Activated CD4-positive, alpha-beta memory T cell treated with anti-CD3 and anti-CD28 coated beads for 36 hours (primary cell): ENCODE measurements at regions of chr1 and their contacts with region 1.

Region 1: DNA sequence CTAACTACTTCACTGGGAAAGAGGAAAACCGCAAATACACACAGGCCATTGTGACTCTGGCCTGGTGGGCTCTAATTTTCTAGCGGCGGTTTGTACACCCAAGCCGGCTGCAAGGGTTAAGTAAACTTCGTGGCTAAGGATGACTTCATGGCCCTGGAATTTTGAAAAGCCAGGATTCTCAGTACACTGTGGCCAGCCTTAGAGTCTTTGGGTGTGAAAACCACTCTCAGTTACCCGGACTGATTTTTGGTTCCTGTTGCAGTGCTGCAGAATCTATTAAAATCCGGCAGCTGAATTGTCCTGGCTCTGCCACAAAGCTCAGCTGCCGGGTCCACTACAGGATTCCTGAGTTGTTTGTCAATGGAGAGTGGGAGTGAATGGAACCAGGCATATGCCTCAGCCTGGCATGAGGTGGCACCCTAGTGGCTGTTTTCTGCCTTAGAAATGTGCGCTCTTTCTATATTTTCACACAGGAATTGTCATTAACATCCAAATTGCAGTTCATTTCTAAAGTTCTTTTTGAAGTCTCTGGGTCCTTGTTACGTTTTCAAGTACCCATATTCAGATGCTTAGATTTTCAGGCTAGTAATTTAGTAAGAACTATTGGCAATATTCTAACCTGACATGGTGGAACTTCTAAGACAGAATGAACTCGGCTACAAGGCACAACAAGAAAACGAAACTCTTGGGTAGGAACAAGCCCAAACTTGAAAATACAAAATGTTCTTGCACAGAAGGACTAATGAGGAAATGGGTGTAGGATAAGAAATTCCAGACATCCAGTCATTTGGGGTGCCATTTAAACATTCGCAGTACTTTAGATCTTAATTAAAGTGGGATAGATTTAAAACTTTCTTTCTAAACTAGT is 255.9 kb downstream of the NFIA start:
- DNase-seq: no peak
- H3K4me3 Mint-ChIP-seq: no peak overlapping the region
- H3K27ac Mint-ChIP-seq: no peak overlapping the region
- H3K4me1 Mint-ChIP-seq: peaks cover 2% of the 10 kb centered on the region
- H3K27me3 Mint-ChIP-seq: peaks cover 2% of the 10 kb centered on the region

Region 2: GRCh38 chr1:60898987-60899386 is 439.2 kb before region 1 on chr1:
- CTCF ChIA-PET with region 1: no interaction called
- POLR2A ChIA-PET with region 1: no interaction called
- intact Hi-C with region 1: loop called (anchors 10 kb)
- DNase-seq: peak; percentile 27
- H3K4me3 Mint-ChIP-seq: no peak overlapping the region
- H3K27ac Mint-ChIP-seq: no peak overlapping the region
- H3K4me1 Mint-ChIP-seq: peaks cover 4% of the 10 kb centered on the region
- H3K27me3 Mint-ChIP-seq: peaks cover 18% of the 10 kb centered on the region

Region 3: GRCh38 chr1:60978421-60979357 is 359.5 kb before region 1 on chr1:
- CTCF ChIA-PET with region 1: interaction called, 4 read pairs
- POLR2A ChIA-PET with region 1: no interaction called
- intact Hi-C with region 1: loop called (anchors 5 kb)
- DNase-seq: peak; percentile 58
- H3K4me3 Mint-ChIP-seq: no peak overlapping the region
- H3K27ac Mint-ChIP-seq: no peak overlapping the region
- H3K4me1 Mint-ChIP-seq: peaks cover 2% of the 10 kb centered on the region
- H3K27me3 Mint-ChIP-seq: peaks cover 3% of the 10 kb centered on the region

Region 4: DNA sequence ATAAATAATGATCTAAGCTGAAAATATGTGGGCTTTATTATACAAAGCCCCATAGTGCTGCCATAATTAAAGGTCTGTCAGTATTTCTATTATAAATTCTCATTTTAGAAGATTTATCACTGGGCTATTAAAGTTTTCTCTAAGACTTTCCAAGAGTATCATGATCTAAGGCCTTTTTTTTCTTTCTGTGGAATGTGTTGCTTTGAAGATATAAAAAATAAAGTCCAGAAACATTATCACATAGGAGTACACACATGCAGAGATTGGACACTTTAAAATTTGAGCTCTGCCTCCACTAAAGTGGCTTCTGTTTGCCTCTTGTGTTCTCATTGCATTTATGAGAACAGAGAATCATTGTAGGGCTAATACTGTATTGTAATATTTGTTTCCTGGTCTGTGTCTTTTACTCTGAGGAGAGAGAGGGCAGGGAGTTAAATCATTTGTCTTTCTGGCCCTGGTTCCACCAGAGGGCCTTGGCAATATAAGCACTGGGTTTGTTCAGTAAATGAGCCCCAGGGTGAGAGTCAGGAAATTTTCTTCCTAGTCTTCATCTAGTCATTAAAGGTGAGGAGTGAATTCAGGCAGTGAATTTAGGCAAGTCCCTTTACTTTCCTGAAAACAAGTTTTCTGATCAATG is 185.6 kb before region 1 on chr1:
- CTCF ChIA-PET with region 1: no interaction called
- POLR2A ChIA-PET with region 1: no interaction called
- intact Hi-C with region 1: no loop called
- DNase-seq: no peak
- H3K4me3 Mint-ChIP-seq: no peak overlapping the region
- H3K27ac Mint-ChIP-seq: no peak overlapping the region
- H3K4me1 Mint-ChIP-seq: peaks cover 8% of the 10 kb centered on the region
- H3K27me3 Mint-ChIP-seq: no peaks in the 10 kb centered on the region